GM13977 (cell line): ENCODE measurements at regions of chr19 and their contacts with region 1.

Region 1: GRCh38 chr19:45439569-45440254 is 16.0 kb upstream of the ERCC1 start:
- DNase-seq: peak; percentile 92
- CTCF ChIP-seq: peak; percentile 91

Region 2: GRCh38 chr19:45478454-45479238 is 38.9 kb after region 1 on chr19:
- in situ Hi-C with region 1: loop called (anchors 5 kb)
- DNase-seq: peak; percentile 81
- CTCF ChIP-seq: peak; percentile 88